Activated CD4-positive, alpha-beta T cell treated with anti-CD3 and anti-CD28 coated beads, Interleukin-2, amount 10 ng/mL, durations not matched to agents 24 days and 14 days (primary cell): ENCODE measurements at regions of chr11 and their contacts with region 1.

Region 1: GRCh38 chr11:48055292-48056132 is 75.2 kb downstream of the PTPRJ start:
- DNase-seq: peak; percentile 95
- H3K4me3 Mint-ChIP-seq: peak overlapping the region; percentile 44
- H3K27ac Mint-ChIP-seq: peak overlapping the region; percentile 90
- H3K4me1 Mint-ChIP-seq: peaks cover 80% of the 10 kb centered on the region
- H3K27me3 Mint-ChIP-seq: no peaks in the 10 kb centered on the region

Region 2: DNA sequence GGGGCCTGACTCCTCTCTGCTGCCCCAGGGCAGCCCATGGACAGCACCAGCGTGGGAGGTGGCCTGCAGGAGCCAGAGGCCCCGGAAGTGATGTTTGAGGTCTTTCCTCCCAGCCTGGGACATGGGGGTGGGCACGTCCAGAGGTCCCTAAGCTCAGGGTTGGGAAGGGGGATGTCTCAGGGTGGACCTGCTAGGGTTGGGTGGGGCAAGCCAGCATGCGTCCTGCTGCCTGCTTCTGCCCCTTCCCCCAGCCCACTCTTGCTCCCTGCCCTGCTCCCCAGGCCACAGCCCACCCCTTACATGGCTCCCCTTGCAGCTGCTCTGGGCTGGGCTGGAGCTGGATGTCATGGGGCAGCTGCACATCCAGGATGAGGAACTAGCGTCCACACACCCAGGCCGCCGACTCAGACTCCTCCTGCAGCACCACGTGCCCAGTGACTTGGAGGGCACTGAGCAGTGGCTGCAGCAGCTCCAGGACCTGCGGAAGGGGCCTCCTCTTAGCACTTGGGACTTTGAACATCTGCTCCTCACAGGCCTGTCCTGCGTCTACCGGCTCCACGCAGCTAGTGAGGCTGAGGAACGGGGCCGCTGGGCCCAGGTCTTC is 467.7 kb before region 1 on chr11:
- intact Hi-C with region 1: no loop called
- DNase-seq: no peak
- H3K4me3 Mint-ChIP-seq: no peak overlapping the region
- H3K27ac Mint-ChIP-seq: no peak overlapping the region
- H3K4me1 Mint-ChIP-seq: peaks cover 7% of the 10 kb centered on the region
- H3K27me3 Mint-ChIP-seq: peaks cover 4% of the 10 kb centered on the region

Region 3: DNA sequence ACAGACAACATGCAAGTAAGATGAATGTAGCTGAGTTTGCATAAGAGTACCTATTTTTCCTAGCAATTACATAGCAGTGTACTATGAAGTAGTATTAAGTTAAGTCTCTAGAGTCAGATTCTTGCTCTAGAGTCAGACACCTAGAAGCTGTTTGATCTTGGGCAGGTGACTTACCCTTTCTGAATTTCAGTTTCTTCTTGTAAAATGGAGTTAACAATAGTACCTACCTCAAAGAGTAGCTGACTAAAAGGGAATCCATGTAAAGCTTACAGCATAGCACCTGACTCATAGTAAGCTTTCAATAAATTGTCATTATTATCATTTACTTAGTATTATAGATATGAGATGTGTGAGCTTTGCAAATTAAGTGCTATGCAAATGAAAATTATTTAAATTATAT is 123.0 kb before region 1 on chr11:
- intact Hi-C with region 1: loop called (anchors 1 kb)
- DNase-seq: no peak
- H3K4me3 Mint-ChIP-seq: no peak overlapping the region
- H3K27ac Mint-ChIP-seq: no peak overlapping the region
- H3K4me1 Mint-ChIP-seq: peaks cover 22% of the 10 kb centered on the region
- H3K27me3 Mint-ChIP-seq: no peaks in the 10 kb centered on the region

Region 4: GRCh38 chr11:48013269-48013901 is 42.1 kb before region 1 on chr11:
- intact Hi-C with region 1: loop called (anchors 1 kb)
- DNase-seq: peak; percentile 82
- H3K4me3 Mint-ChIP-seq: peak overlapping the region; percentile 56
- H3K27ac Mint-ChIP-seq: peak overlapping the region; percentile 98
- H3K4me1 Mint-ChIP-seq: peaks cover 83% of the 10 kb centered on the region
- H3K27me3 Mint-ChIP-seq: no peaks in the 10 kb centered on the region

Region 5: GRCh38 chr11:48073031-48073861 is 17.7 kb after region 1 on chr11:
- intact Hi-C with region 1: loop called (anchors 2 kb)
- DNase-seq: no peak
- H3K4me3 Mint-ChIP-seq: peak overlapping the region; percentile 40
- H3K27ac Mint-ChIP-seq: peak overlapping the region; percentile 92
- H3K4me1 Mint-ChIP-seq: peaks cover 31% of the 10 kb centered on the region
- H3K27me3 Mint-ChIP-seq: no peaks in the 10 kb centered on the region

Region 6: DNA sequence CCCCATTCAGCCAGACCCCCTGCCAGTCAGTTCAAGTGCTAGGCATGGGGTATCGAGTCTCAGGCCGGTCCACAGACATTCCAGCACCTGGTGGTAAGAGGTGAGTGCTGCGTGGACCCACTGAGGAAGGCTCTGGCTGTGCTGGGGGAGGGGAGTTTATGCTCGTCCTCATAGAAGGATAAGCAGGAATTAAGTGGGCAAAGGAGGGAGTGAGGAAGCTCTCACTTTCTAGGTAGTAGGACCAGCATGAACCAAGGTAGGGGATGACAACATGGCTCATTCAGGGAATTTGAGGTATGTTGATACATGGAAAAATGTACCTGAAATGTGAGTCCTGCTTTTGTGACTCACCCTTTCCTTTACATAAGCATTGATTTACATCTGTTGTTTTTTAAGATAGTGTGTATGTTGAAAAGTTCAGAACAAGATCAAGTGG is 41.5 kb after region 1 on chr11:
- intact Hi-C with region 1: loop called (anchors 2 kb)
- DNase-seq: no peak
- H3K4me3 Mint-ChIP-seq: peak overlapping the region; percentile 62
- H3K27ac Mint-ChIP-seq: peak overlapping the region; percentile 93
- H3K4me1 Mint-ChIP-seq: peaks cover 59% of the 10 kb centered on the region
- H3K27me3 Mint-ChIP-seq: no peaks in the 10 kb centered on the region